ENCODE measurements at regions of chr2 and their contacts with region 1.

Region 1: GRCh38 chr2:75403991-75404428 is 156.7 kb downstream of the EVA1A start:
- DNase-seq: no peak
- ATAC-seq: peak; percentile 90
- H3K4me3 Mint-ChIP-seq: no peak overlapping the region
- H3K27ac Mint-ChIP-seq: peak overlapping the region; percentile 20
- H3K4me1 Mint-ChIP-seq: peaks cover 22% of the 10 kb centered on the region
- H3K27me3 Mint-ChIP-seq: no peaks in the 10 kb centered on the region
- CTCF ChIP-seq: peak; percentile 51

Region 2: DNA sequence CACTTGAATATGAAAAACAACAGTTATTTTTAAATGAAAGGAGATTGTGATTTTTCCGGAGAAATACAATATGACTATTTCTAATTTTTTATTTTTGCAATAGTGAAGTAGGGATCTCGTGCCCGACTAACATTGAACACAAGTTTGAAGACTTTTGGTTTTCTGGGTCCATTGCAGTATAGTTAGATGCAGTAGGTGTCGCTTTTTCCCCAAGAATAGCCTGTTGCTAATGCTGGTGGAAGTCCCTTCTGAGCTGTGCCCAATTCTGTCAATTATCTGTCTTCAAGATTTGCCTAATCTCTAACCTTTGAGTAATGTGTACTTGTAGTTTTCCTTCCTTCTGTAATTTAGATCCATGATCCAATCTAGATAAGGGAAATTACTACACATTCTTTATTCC is 713.4 kb before region 1 on chr2:
- CTCF ChIA-PET with region 1: no interaction called
- POLR2A ChIA-PET with region 1: no interaction called
- intact Hi-C with region 1: loop called (anchors 1 kb)
- DNase-seq: no peak
- ATAC-seq: peak; percentile 50
- H3K4me3 Mint-ChIP-seq: no peak overlapping the region
- H3K27ac Mint-ChIP-seq: no peak overlapping the region
- H3K4me1 Mint-ChIP-seq: no peaks in the 10 kb centered on the region
- H3K27me3 Mint-ChIP-seq: peaks cover 6% of the 10 kb centered on the region
- CTCF ChIP-seq: peak; percentile 5

Region 3: GRCh38 chr2:75064691-75065396 is 339.2 kb before region 1 on chr2:
- CTCF ChIA-PET with region 1: interaction called, 14 read pairs
- POLR2A ChIA-PET with region 1: no interaction called
- intact Hi-C with region 1: loop called (anchors 1 kb)
- DNase-seq: peak; percentile 42
- ATAC-seq: no peak
- H3K4me3 Mint-ChIP-seq: no peak overlapping the region
- H3K27ac Mint-ChIP-seq: no peak overlapping the region
- H3K4me1 Mint-ChIP-seq: no peaks in the 10 kb centered on the region
- H3K27me3 Mint-ChIP-seq: no peaks in the 10 kb centered on the region
- CTCF ChIP-seq: peak; percentile 56

Region 4: DNA sequence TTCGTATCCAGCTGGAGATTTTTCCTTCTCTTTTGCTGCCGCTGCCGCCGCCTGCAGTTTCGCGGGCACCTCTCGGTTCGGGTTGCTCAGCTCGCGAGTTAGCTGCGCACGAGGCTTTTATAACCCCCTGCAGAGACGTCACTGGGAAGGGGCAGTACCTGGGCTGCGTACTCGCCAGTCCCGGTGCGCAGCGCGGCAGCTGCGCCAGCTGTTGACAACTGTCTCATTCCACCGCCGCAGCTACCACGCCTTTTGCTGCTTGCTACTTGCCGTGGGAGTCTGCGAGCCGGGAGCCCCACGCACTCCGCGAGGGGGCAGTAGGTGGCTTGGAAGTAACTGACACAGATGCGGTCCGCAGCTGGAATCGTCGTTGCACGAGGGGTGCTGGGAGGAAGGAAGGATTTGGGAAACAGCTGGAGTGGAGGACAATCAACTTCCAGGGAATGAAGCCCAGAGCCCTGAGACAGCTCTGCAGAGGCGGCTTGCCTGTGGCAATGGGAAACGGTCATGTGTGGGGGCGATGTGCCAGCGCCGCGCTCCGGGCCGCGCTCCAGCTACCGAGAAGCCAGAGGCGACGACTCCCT is 204.5 kb before region 1 on chr2 and contains the start of gene TACR1:
- CTCF ChIA-PET with region 1: interaction called, 21 read pairs
- POLR2A ChIA-PET with region 1: interaction called, 3 read pairs
- intact Hi-C with region 1: loop called (anchors 1 kb)
- DNase-seq: peak; percentile 55
- ATAC-seq: peak; percentile 79
- H3K4me3 Mint-ChIP-seq: peak within 1 kb of the TSS; percentile 81
- H3K27ac Mint-ChIP-seq: no peak within 1 kb of the TSS
- H3K4me1 Mint-ChIP-seq: peaks cover 20% of the 10 kb centered on the region
- H3K27me3 Mint-ChIP-seq: peaks cover 61% of the 10 kb centered on the region
- CTCF ChIP-seq: peak; percentile 43
- total RNA-seq, gene TACR1: not detected in 2 replicates

Region 5: DNA sequence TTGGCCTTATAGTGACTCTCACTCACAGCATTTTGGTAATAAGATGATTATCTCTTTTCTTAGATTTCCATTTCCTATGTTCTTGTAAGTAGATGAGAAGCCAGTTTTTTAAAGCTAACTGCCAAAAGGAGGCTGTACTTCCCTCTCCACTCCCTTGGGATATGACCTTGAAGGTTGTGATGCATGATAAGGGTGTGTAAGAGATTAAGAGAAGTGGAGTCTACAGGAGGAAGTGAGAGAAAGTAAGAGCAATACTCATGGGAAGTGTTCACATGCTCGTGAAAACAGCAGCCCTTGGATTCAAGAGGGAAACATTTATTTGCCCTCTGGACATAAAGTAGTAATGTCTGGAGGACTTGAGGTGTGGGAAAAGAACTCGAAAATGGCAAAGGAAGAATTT is 14.7 kb before region 1 on chr2:
- CTCF ChIA-PET with region 1: interaction called, 8 read pairs
- POLR2A ChIA-PET with region 1: no interaction called
- intact Hi-C with region 1: loop called (anchors 2 kb)
- DNase-seq: no peak
- ATAC-seq: peak; percentile 100
- H3K4me3 Mint-ChIP-seq: no peak overlapping the region
- H3K27ac Mint-ChIP-seq: no peak overlapping the region
- H3K4me1 Mint-ChIP-seq: peaks cover 40% of the 10 kb centered on the region
- H3K27me3 Mint-ChIP-seq: no peaks in the 10 kb centered on the region
- CTCF ChIP-seq: no peak

Region 6: GRCh38 chr2:75466708-75467311 is 62.8 kb after region 1 on chr2:
- CTCF ChIA-PET with region 1: interaction called, 5 read pairs
- POLR2A ChIA-PET with region 1: no interaction called
- intact Hi-C with region 1: loop called (anchors 2 kb)
- DNase-seq: peak; percentile 17
- ATAC-seq: no peak
- H3K4me3 Mint-ChIP-seq: no peak overlapping the region
- H3K27ac Mint-ChIP-seq: no peak overlapping the region
- H3K4me1 Mint-ChIP-seq: peaks cover 3% of the 10 kb centered on the region
- H3K27me3 Mint-ChIP-seq: peaks cover 13% of the 10 kb centered on the region
- CTCF ChIP-seq: peak; percentile 77

Region 7: GRCh38 chr2:75896779-75897366 is 492.9 kb after region 1 on chr2:
- CTCF ChIA-PET with region 1: no interaction called
- POLR2A ChIA-PET with region 1: no interaction called
- intact Hi-C with region 1: no loop called
- DNase-seq: no peak
- ATAC-seq: no peak
- H3K4me3 Mint-ChIP-seq: no peak overlapping the region
- H3K27ac Mint-ChIP-seq: no peak overlapping the region
- H3K4me1 Mint-ChIP-seq: no peaks in the 10 kb centered on the region
- H3K27me3 Mint-ChIP-seq: no peaks in the 10 kb centered on the region
- CTCF ChIP-seq: no peak

Measured in activated B cell treated with CpG ODN at 0.5 μM for 24 hours (primary cell).